Right cardiac atrium (tissue), 5 donors: ENCODE measurements at regions of chr17 and their contacts with region 1.

Region 1: GRCh38 chr17:44044067-44044466 is 22.4 kb downstream of the LSM12 start:
- DNase-seq: no peak
- ATAC-seq: no peak
- H3K4me3 ChIP-seq: no peak overlapping the region
- H3K27ac ChIP-seq: no peak overlapping the region
- H3K4me1 ChIP-seq: peaks cover 6% of the 10 kb centered on the region
- H3K27me3 ChIP-seq: no peaks in the 10 kb centered on the region

Region 2: GRCh38 chr17:44006598-44007345 is 37.3 kb before region 1 on chr17:
- intact Hi-C with region 1: loop called in 1 of 4 experiments (anchors 5 kb)
- DNase-seq: peak; percentile 99 to 100 (median 99)
- ATAC-seq: peak; percentile 94
- H3K4me3 ChIP-seq: peak overlapping the region; percentile 36
- H3K27ac ChIP-seq: no peak overlapping the region
- H3K4me1 ChIP-seq: peaks cover 3% of the 10 kb centered on the region
- H3K27me3 ChIP-seq: no peaks in the 10 kb centered on the region